Lower lobe of right lung (tissue), 2 donors: ENCODE measurements at regions of chr13 and their contacts with region 1.

Region 1: DNA sequence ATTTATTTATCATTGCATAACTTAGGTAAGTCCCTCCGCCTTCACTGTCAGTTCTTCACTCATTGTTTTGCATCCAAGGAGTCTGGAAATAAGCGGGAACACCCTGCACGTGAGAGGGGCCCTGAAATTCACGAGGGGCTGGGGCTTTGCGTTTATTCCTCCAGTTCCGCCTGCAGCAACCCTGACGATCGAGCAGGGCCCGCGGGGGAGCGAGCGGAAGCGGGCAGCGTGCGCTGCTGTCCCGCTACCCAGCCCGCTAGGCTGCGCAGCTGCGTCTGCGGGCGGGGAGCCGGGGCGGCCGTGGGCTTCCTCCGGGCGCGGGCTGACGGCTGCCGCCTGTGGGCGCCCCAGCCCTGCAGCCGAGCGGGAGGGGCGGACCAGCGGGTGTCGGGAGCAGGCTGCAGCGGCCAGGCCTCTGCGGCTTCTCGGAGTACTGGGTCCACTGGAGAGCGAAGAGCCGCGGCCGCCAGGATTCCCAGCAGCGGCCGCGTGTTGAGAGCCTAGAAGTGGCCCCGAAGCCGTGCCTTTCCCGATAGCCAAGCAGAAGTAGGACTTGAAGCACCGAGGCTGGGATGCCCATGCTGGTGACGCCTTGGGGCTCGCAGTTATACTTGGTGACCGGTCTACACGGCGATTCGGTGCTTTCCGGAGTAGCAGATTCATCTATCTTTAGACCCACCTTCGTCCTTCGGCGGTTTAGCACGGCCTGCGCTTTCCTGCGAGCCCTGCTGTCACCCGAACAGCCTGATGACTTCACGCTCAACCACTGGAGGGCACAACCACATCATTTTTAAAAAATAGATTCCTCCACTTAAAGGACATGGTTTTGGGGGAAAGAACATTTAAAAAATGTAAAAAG is 32.9 kb upstream of the SACS start:
- DNase-seq: peak; percentile 73
- ATAC-seq: peak; percentile 94 to 96
- H3K4me3 ChIP-seq: peak overlapping the region; percentile 60
- H3K27ac ChIP-seq: peak overlapping the region; percentile 79
- H3K4me1 ChIP-seq: peaks cover 7% of the 10 kb centered on the region
- H3K27me3 ChIP-seq: no peaks in the 10 kb centered on the region
- CTCF ChIP-seq: peak; percentile 52

Region 2: GRCh38 chr13:23330356-23330755 is 136.0 kb before region 1 on chr13:
- intact Hi-C with region 1: no loop called
- DNase-seq: no peak
- ATAC-seq: no peak
- H3K4me3 ChIP-seq: no peak overlapping the region
- H3K27ac ChIP-seq: no peak overlapping the region
- H3K4me1 ChIP-seq: no peaks in the 10 kb centered on the region
- H3K27me3 ChIP-seq: no peaks in the 10 kb centered on the region
- CTCF ChIP-seq: no peak

Region 3: DNA sequence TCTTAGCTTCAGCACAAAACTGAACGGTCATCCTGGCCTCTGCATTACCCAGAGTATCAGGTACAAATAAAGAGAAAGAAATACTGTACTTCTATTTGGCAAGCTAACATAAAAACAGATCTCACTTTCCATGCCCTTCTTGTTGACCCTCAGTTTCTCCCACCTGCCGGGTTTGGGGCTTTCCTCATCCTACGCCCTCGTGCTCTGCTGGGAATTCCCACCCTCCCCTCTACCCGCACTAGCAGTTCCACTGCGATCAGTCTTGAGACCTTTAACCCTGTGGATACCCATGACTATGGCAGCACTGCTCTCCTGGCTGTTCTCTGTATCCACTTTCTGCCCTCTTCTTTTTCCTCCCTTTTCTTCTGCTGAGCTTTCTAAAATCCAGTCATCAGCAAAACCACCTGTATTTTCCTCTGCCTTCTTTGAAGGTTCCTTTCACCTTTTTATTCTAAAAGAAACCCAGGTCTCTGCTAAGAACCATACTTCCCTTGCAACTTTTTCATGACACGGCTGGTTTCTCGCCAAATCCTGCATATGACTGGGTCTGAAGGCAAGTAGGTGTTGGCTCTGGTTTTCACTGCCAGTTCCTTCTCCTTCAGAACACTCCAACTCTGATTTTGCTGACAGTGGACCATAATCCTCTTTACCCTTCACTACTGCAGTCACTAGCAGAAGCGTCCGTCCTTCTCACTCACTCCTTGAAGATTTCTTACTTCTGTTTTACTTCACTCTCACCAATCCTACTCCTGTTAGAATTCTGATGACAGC is 323.4 kb after region 1 on chr13:
- intact Hi-C with region 1: no loop called
- DNase-seq: no peak
- ATAC-seq: no peak
- H3K4me3 ChIP-seq: no peak overlapping the region
- H3K27ac ChIP-seq: no peak overlapping the region
- H3K4me1 ChIP-seq: peaks cover 12% of the 10 kb centered on the region
- H3K27me3 ChIP-seq: no peaks in the 10 kb centered on the region
- CTCF ChIP-seq: no peak

Region 4: DNA sequence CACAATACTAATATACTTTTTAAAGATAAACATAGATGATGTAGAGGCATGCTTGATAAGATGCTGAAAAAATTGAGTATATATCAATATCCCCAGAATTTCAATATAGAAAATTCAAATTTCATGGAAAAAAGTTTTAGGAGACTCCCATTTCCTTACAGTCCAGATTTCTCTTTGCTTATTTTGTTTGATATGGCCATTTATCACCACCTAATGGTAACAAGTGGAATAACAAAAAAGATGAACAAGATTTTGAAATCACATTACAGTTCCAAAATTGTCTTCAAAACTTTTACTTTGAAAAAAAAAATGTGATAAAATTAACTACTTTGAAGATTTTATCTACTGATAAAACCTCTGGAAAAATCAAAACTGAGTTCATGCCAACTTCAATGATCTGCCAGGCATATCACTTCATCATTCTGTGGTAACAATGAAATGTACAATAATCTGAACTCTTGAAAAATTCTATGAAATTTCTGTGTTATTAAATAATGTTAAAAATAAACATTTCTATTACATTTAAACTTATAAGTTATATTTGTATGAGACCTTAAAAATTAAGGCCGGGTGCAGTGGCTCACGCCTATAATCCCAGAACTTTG is 405.3 kb after region 1 on chr13:
- intact Hi-C with region 1: loop called (anchors 10 kb)
- DNase-seq: no peak
- ATAC-seq: peak in 1 of 2 donors; percentile 56
- H3K4me3 ChIP-seq: no peak overlapping the region
- H3K27ac ChIP-seq: no peak overlapping the region
- H3K4me1 ChIP-seq: peaks cover 23% of the 10 kb centered on the region
- H3K27me3 ChIP-seq: no peaks in the 10 kb centered on the region
- CTCF ChIP-seq: peak; percentile 65